Dendritic cell treated with granulocyte-macrophage colony-stimulating factor and Interleukin-4, amounts not matched to agents 40 ng/mL and 50 ng/mL, for 4 days (primary cell): ENCODE measurements at regions of chr13 and their contacts with region 1.

Region 1: DNA sequence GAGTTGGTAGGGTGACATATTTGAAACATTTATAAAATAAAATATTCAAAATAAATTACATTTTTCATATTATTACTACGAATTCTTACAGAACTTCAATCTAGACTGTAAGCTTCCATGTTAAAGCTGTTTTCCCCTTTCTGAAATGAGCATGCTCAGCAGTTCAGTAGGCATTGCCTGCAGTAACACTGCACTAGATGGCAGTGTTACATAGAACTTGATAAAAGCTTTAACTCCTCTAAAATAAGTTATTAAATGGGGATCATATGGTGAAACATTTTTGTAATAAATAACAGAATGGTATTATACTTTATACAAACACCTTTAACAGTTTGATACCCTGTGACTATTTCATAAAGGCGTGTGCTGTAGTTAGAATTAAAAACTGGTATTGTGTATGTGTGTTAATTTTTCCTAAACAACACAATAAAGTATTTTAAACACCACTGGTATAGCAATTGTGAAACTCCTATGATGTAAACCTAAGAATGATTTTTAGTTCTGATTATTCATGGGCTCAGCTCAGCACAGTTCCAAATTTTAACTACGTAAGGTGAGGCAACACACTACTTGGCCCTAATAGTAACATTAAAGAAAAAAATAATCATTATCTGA is 11.6 kb upstream of the GPR18 start:
- H3K4me3 Mint-ChIP-seq: no peak overlapping the region
- H3K27ac Mint-ChIP-seq: peak overlapping the region; percentile 93
- H3K4me1 Mint-ChIP-seq: peaks cover 59% of the 10 kb centered on the region
- H3K27me3 Mint-ChIP-seq: no peaks in the 10 kb centered on the region

Region 2: DNA sequence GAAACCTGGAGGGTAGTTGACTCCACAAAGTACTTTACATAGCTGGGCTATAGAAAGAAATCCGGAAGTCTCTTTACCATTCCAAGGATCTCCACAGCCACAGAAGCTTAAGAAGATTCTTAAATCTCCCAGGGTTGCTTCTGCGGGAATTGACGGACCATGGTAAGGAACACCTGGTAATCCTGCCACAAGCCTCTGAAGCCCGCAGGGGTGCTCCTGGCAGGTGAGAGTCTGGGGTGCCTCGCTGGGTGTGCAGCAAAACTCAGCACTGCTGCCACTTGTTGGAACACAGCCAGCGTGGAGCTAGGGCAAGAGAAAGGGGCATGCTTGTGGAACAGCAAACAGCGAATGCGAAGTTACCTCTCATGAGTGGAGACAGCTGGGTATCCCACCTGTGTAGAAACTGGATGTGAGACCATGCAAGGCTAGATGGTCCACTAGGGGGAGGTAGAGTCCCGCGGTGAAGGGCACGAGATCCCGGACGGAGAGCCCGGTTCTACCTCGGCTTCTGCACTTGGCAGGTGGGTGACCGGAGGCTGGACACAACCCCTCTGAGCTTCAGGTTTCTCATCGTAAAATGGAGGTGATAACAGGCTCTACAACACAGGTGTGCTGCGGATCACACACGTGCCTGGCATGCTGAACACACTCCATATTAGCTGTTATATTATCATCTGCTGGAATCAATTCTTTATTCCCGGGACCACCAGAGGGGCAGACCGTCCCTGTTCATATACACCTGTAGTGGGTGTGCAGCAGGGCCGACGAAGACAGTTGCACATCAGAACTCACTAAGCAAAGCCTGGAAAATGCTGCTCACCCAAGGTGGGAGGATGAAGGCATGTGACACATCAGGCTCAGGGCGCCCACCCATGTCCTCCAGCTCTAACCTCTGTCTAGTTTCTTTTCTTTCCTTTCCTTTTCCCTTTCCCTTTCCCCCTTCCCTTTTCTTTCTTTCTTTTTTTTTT is 93.1 kb before region 1 on chr13:
- intact Hi-C with region 1: loop called (anchors 1 kb)
- H3K4me3 Mint-ChIP-seq: peak overlapping the region; percentile 33
- H3K27ac Mint-ChIP-seq: no peak overlapping the region
- H3K4me1 Mint-ChIP-seq: peaks cover 46% of the 10 kb centered on the region
- H3K27me3 Mint-ChIP-seq: peaks cover 49% of the 10 kb centered on the region

Region 3: GRCh38 chr13:99322297-99323103 is 52.8 kb after region 1 on chr13:
- intact Hi-C with region 1: loop called (anchors 1 kb)
- H3K4me3 Mint-ChIP-seq: peak overlapping the region; percentile 47
- H3K27ac Mint-ChIP-seq: peak overlapping the region; percentile 88
- H3K4me1 Mint-ChIP-seq: peaks cover 80% of the 10 kb centered on the region
- H3K27me3 Mint-ChIP-seq: no peaks in the 10 kb centered on the region

Region 4: GRCh38 chr13:99386911-99387788 is 117.4 kb after region 1 on chr13:
- intact Hi-C with region 1: loop called (anchors 2 kb)
- H3K4me3 Mint-ChIP-seq: no peak overlapping the region
- H3K27ac Mint-ChIP-seq: peak overlapping the region; percentile 84
- H3K4me1 Mint-ChIP-seq: peaks cover 74% of the 10 kb centered on the region
- H3K27me3 Mint-ChIP-seq: peaks cover 2% of the 10 kb centered on the region

Region 5: GRCh38 chr13:99501184-99501847 is 231.6 kb after region 1 on chr13 and contains the start of gene TM9SF2:
- intact Hi-C with region 1: loop called (anchors 5 kb)
- H3K4me3 Mint-ChIP-seq: peak within 1 kb of the TSS; percentile 100
- H3K27ac Mint-ChIP-seq: peak within 1 kb of the TSS; percentile 99
- H3K4me1 Mint-ChIP-seq: peaks cover 63% of the 10 kb centered on the region
- H3K27me3 Mint-ChIP-seq: no peaks in the 10 kb centered on the region